CD14-positive monocyte (primary cell): ENCODE measurements at regions of chr14 and their contacts with region 1.

Region 1: GRCh38 chr14:67704484-67705089 is 2.9 kb downstream of the RDH12 start:
- DNase-seq: peak; percentile 58 to 72 (median 69)
- H3K4me3 ChIP-seq: peak overlapping the region in 2 of 3 experiments; percentile 30 to 55
- H3K4me3 Mint-ChIP-seq: peak overlapping the region in 1 of 2 donors; percentile 78
- H3K27ac ChIP-seq: peak overlapping the region in 1 of 2 donors; percentile 27
- H3K27ac Mint-ChIP-seq: peak overlapping the region; percentile 60 to 92 (median 79)
- H3K4me1 ChIP-seq: peaks cover 31 to 39% of the 10 kb centered on the region in 2 donors
- H3K4me1 Mint-ChIP-seq: peaks cover 35% of the 10 kb centered on the region
- H3K27me3 ChIP-seq: no peaks in the 10 kb centered on the region
- H3K27me3 Mint-ChIP-seq: peaks cover 0 to 4% (median 2%) of the 10 kb centered on the region in 3 donors
- CTCF ChIP-seq: peak; percentile 85

Region 2: DNA sequence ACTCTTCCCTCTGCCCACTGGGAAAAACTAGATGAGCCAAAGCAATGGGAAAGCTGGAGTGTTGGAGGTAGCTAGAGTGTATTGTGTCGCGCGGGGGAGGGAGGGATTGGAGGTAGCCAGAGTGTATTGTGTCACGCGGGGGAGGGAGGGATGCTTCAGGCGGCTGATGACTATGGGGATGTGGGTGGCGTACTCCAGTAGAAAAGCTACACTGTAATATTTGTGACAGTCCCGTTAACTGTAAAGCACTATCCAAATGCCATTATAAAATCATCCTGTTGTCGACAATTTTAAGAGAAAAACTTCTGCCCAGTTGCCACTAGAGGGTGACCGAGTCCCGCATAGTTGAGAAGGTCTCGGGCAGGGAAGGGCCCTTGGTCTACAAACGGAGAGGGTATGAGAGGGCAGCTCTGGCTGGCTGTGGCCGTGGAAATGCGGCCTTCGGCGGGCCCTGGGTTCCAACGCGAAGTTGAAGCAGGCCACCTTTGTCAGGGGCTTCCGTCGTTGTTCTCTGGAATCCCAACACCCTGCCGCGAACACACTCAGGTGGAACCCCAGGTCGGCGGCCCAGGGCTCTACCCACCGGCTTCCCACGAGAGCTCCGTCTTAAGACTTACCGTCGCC is 277.5 kb before region 1 on chr14:
- intact Hi-C with region 1: loop called in 1 of 2 experiments (anchors 10 kb)
- DNase-seq: peak; percentile 54 to 63 (median 56)
- H3K4me3 ChIP-seq: no peak overlapping the region
- H3K4me3 Mint-ChIP-seq: no peak overlapping the region
- H3K27ac ChIP-seq: no peak overlapping the region
- H3K27ac Mint-ChIP-seq: peak overlapping the region in 1 of 7 donors; percentile 66
- H3K4me1 ChIP-seq: peaks cover 5 to 9% of the 10 kb centered on the region in 2 donors
- H3K4me1 Mint-ChIP-seq: peaks cover 14% of the 10 kb centered on the region
- H3K27me3 ChIP-seq: peaks cover 6 to 15% of the 10 kb centered on the region in 2 donors
- H3K27me3 Mint-ChIP-seq: peaks cover 20 to 44% (median 31%) of the 10 kb centered on the region in 3 donors
- CTCF ChIP-seq: peak; percentile 86

Region 3: DNA sequence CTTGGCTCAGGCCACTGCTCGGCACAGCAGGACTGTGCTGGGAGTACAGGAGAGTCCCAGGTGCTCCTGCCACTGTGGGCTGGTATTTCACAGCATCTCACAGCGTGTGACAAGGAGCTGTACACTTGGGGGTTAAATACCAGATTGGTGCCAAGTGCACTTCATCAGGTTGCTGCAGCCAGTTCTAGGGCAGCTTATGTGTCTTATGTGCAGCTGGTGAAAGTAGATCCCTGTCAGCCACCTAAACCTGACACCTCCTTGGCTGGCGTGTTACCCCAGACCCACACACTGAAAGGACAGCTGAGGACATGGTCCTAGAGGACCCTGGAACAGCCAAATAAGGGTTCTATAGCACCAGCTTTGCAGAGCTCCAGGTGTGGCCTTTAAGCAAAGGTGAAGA is 152.6 kb before region 1 on chr14:
- intact Hi-C with region 1: no loop called
- DNase-seq: no peak
- H3K4me3 ChIP-seq: no peak overlapping the region
- H3K4me3 Mint-ChIP-seq: no peak overlapping the region
- H3K27ac ChIP-seq: no peak overlapping the region
- H3K27ac Mint-ChIP-seq: no peak overlapping the region
- H3K4me1 ChIP-seq: no peaks in the 10 kb centered on the region
- H3K4me1 Mint-ChIP-seq: peaks cover 5% of the 10 kb centered on the region
- H3K27me3 ChIP-seq: no peaks in the 10 kb centered on the region
- H3K27me3 Mint-ChIP-seq: peaks cover 2 to 21% (median 4%) of the 10 kb centered on the region in 3 donors
- CTCF ChIP-seq: no peak

Region 4: GRCh38 chr14:67583711-67584644 is 120.6 kb before region 1 on chr14:
- intact Hi-C with region 1: loop called (anchors 1 to 5 kb)
- DNase-seq: peak; percentile 25 to 49 (median 48)
- H3K4me3 ChIP-seq: no peak overlapping the region
- H3K4me3 Mint-ChIP-seq: no peak overlapping the region
- H3K27ac ChIP-seq: no peak overlapping the region
- H3K27ac Mint-ChIP-seq: no peak overlapping the region
- H3K4me1 ChIP-seq: no peaks in the 10 kb centered on the region
- H3K4me1 Mint-ChIP-seq: peaks cover 2% of the 10 kb centered on the region
- H3K27me3 ChIP-seq: no peaks in the 10 kb centered on the region
- H3K27me3 Mint-ChIP-seq: peaks cover 0 to 2% (median 0%) of the 10 kb centered on the region in 3 donors
- CTCF ChIP-seq: peak; percentile 74

Region 5: GRCh38 chr14:67619446-67620216 is 85.0 kb before region 1 on chr14 and contains the start of gene ARG2:
- intact Hi-C with region 1: loop called (anchors 2 to 5 kb)
- DNase-seq: peak; percentile 93 to 98 (median 94)
- H3K4me3 ChIP-seq: peak within 1 kb of the TSS; percentile 51 to 89 (median 75)
- H3K4me3 Mint-ChIP-seq: peak within 1 kb of the TSS; percentile 85
- H3K27ac ChIP-seq: peak within 1 kb of the TSS in 1 of 2 donors; percentile 73
- H3K27ac Mint-ChIP-seq: peak within 1 kb of the TSS; percentile 74 to 91 (median 83)
- H3K4me1 ChIP-seq: peaks cover 16 to 20% of the 10 kb centered on the region in 2 donors
- H3K4me1 Mint-ChIP-seq: peaks cover 24% of the 10 kb centered on the region
- H3K27me3 ChIP-seq: peaks cover 4 to 10% of the 10 kb centered on the region in 2 donors
- H3K27me3 Mint-ChIP-seq: peaks cover 13 to 27% (median 23%) of the 10 kb centered on the region in 3 donors
- CTCF ChIP-seq: no peak
- polyA plus RNA-seq, gene ARG2: 0.13 to 0.46 (median 0.33) TPM

Region 6: DNA sequence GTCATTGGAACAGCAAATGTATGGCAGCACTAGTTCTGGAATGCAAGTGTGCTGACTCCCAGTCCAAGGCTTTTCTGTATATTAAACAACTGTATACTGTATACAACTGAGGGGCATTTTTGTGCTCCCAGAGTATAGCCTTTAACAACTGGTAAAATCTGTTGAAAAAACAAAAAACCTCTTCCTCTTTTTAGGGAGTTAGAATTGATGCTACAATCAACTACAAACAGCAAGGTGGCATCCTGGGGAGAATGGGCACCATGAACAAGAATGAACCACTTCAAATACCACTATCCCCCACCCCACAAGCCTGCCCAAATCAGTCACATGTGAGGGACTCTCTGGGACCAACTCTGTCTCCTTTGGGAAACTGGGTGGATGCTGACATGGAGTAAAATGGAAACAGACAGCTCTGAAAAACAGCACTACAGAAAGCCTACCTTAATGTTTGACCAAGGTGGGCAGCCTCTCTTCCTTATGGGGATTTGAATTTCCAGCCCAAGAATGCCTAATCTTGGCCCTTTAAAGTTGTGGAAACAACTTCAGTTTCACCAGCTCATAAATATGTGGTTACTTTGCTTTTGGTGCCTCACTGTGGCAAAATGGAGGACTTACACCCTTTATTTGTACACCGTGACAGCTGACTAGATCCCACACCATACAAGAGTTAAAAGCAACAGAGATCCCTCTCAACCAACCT is 37.7 kb before region 1 on chr14:
- intact Hi-C with region 1: loop called (anchors 5 kb)
- DNase-seq: peak; percentile 36 to 53 (median 51)
- H3K4me3 ChIP-seq: no peak overlapping the region
- H3K4me3 Mint-ChIP-seq: no peak overlapping the region
- H3K27ac ChIP-seq: peak overlapping the region in 1 of 2 donors; percentile 39
- H3K27ac Mint-ChIP-seq: peak overlapping the region in 6 of 7 donors; percentile 58 to 84 (median 74)
- H3K4me1 ChIP-seq: peaks cover 10 to 13% of the 10 kb centered on the region in 2 donors
- H3K4me1 Mint-ChIP-seq: peaks cover 33% of the 10 kb centered on the region
- H3K27me3 ChIP-seq: no peaks in the 10 kb centered on the region
- H3K27me3 Mint-ChIP-seq: no peaks in the 10 kb centered on the region
- CTCF ChIP-seq: peak; percentile 74

Region 7: DNA sequence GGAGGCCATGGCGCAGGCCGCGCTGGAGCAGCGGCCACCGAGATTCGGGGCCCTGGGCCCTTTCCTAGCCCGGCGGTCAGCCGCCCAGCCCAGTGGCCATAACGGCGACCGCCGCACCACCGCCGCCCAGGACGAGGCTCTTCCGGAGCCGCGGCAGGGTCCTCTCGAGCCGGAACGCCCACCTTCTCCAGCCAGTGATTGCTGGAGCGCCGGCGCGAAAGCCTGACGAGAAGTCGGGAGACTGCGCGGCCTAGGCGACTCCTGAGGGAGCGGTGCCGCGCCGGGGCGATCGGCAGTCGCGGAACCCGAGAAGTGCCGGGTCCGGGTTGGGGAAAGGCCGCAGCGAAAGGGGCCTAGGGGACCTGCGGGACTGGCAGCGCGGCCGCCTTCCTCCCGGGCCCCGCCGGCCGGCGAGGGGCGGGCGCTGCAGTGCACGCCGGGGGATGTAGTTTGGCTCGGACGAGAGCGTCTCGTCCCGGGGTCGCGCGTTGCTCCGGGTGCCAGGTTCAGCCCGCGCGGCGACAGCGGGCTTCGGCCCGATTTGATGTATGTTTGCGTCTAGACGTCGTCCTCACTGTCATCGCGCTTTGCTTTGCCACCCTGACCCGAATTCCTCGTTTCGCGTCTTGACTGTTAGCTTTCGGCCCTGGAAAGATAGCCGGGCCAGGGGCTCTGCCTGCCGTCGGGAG is 30.0 kb before region 1 on chr14 and contains the start of gene VTI1B:
- intact Hi-C with region 1: loop called (anchors 5 kb)
- DNase-seq: peak; percentile 59 to 69 (median 69)
- H3K4me3 ChIP-seq: peak within 1 kb of the TSS; percentile 76 to 95 (median 89)
- H3K4me3 Mint-ChIP-seq: peak within 1 kb of the TSS; percentile 91 to 96
- H3K27ac ChIP-seq: peak within 1 kb of the TSS; percentile 83 to 97
- H3K27ac Mint-ChIP-seq: peak within 1 kb of the TSS; percentile 89 to 96 (median 94)
- H3K4me1 ChIP-seq: peaks cover 22 to 31% of the 10 kb centered on the region in 2 donors
- H3K4me1 Mint-ChIP-seq: peaks cover 28% of the 10 kb centered on the region
- H3K27me3 ChIP-seq: no peaks in the 10 kb centered on the region
- H3K27me3 Mint-ChIP-seq: peaks cover 0 to 2% (median 0%) of the 10 kb centered on the region in 3 donors
- CTCF ChIP-seq: no peak
- polyA plus RNA-seq, gene VTI1B: 31.3 to 84.7 (median 84.5) TPM

Region 8: GRCh38 chr14:67900231-67900630 is 195.6 kb after region 1 on chr14:
- intact Hi-C with region 1: no loop called
- DNase-seq: no peak
- H3K4me3 ChIP-seq: no peak overlapping the region
- H3K4me3 Mint-ChIP-seq: no peak overlapping the region
- H3K27ac ChIP-seq: no peak overlapping the region
- H3K27ac Mint-ChIP-seq: no peak overlapping the region
- H3K4me1 ChIP-seq: no peaks in the 10 kb centered on the region
- H3K4me1 Mint-ChIP-seq: no peaks in the 10 kb centered on the region
- H3K27me3 ChIP-seq: no peaks in the 10 kb centered on the region
- H3K27me3 Mint-ChIP-seq: no peaks in the 10 kb centered on the region
- CTCF ChIP-seq: no peak

Region 9: DNA sequence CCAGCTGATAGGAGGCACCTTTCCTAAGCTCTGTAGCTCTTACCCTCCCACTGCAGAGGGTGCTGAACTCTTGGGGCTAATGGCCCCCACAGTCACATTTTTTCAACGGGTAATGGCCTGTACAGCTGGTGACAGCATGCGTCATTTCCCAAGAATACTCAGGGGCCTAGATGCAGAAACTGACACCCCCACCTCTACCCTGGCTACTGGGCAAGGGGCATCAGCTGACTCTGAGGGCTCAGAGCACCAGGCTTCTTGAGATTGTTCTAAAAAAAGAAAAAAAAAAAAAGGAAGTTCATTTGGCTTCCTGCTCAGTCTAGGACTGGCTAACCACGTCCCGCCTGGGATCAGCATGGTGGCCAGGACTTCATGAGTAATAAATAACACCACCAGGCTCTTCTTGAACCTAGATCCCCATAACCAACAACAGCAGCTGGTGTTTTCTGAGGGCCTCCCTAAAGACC is 1053.1 kb after region 1 on chr14:
- intact Hi-C with region 1: loop called in 1 of 2 experiments (anchors 5 kb)
- DNase-seq: peak; percentile 96 to 98 (median 97)
- H3K4me3 ChIP-seq: peak overlapping the region in 1 of 3 experiments; percentile 1
- H3K4me3 Mint-ChIP-seq: peak overlapping the region; percentile 34 to 65
- H3K27ac ChIP-seq: peak overlapping the region in 1 of 2 donors; percentile 44
- H3K27ac Mint-ChIP-seq: peak overlapping the region; percentile 67 to 89 (median 82)
- H3K4me1 ChIP-seq: peaks cover 31 to 34% of the 10 kb centered on the region in 2 donors
- H3K4me1 Mint-ChIP-seq: peaks cover 39% of the 10 kb centered on the region
- H3K27me3 ChIP-seq: peaks cover 25 to 54% of the 10 kb centered on the region in 2 donors
- H3K27me3 Mint-ChIP-seq: peaks cover 56 to 82% (median 70%) of the 10 kb centered on the region in 3 donors
- CTCF ChIP-seq: no peak